HepG2 (cell line): ENCODE measurements at regions of chr7 and their contacts with region 1.

Region 1: GRCh38 chr7:131654668-131655326 is 98.4 kb upstream of the PODXL start:
- DNase-seq: peak; percentile 45
- ATAC-seq: peak; percentile 97
- H3K4me3 ChIP-seq: no peak overlapping the region
- H3K27ac ChIP-seq: no peak overlapping the region
- H3K4me1 ChIP-seq: no peaks in the 10 kb centered on the region
- H3K27me3 ChIP-seq: peaks cover 0 to 6% of the 10 kb centered on the region in 2 experiments; a peak in 2 of 5 replicates
- CTCF ChIP-seq: peak; percentile 95
- EP300 ChIP-seq: no peak
- POLR2A ChIP-seq: no peak
- RAD21 ChIP-seq: peak; percentile 78

Region 2: GRCh38 chr7:131507592-131508331 is 147.0 kb before region 1 on chr7:
- CTCF ChIA-PET with region 1: interaction called, 10 read pairs
- POLR2A ChIA-PET with region 1: no interaction called
- in situ Hi-C with region 1: loop called (anchors 10 kb)
- intact Hi-C with region 1: loop called (anchors 1 kb)
- DNase-seq: peak; percentile 53
- ATAC-seq: peak; percentile 75
- H3K4me3 ChIP-seq: peak overlapping the region in 1 of 3 experiments; percentile 40; a peak in 1 of 6 replicates
- H3K27ac ChIP-seq: no peak overlapping the region
- H3K4me1 ChIP-seq: peaks cover 31% of the 10 kb centered on the region
- H3K27me3 ChIP-seq: no peaks in the 10 kb centered on the region; a peak in 1 of 5 replicates
- CTCF ChIP-seq: peak; percentile 96
- EP300 ChIP-seq: no peak
- POLR2A ChIP-seq: no peak
- RAD21 ChIP-seq: peak; percentile 77

Region 3: GRCh38 chr7:131546583-131547111 is 108.2 kb before region 1 on chr7:
- CTCF ChIA-PET with region 1: interaction called, 3 read pairs
- POLR2A ChIA-PET with region 1: no interaction called
- in situ Hi-C with region 1: loop called (anchors 5 kb)
- intact Hi-C with region 1: loop called (anchors 1 kb)
- DNase-seq: peak; percentile 46
- ATAC-seq: peak; percentile 26
- H3K4me3 ChIP-seq: no peak overlapping the region
- H3K27ac ChIP-seq: no peak overlapping the region
- H3K4me1 ChIP-seq: peaks cover 24% of the 10 kb centered on the region
- H3K27me3 ChIP-seq: peaks cover 0 to 11% of the 10 kb centered on the region in 2 experiments; a peak in 2 of 5 replicates
- CTCF ChIP-seq: peak; percentile 61
- EP300 ChIP-seq: no peak
- POLR2A ChIP-seq: no peak
- RAD21 ChIP-seq: no peak

Region 4: DNA sequence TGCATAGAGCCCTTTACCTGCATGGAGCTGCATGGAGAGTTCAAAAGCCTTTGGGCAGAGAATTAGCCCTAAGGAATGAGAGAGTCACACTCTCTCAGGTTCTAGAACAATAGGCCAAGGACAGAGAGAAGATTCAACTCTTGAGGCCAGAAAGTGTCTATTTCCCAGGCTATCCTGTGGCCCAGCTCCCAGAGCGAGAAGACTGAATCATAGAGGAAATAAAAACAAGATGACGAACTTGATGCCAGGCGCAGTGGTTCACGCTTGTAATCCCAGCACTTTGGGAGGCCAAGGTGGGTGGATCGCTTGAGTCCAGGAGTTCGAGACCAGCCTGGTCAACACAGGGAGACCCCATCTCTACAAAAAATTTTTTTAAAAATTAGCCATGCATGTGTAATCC is 80.1 kb before region 1 on chr7:
- CTCF ChIA-PET with region 1: no interaction called
- POLR2A ChIA-PET with region 1: no interaction called
- in situ Hi-C with region 1: no loop called
- intact Hi-C with region 1: no loop called
- DNase-seq: no peak
- ATAC-seq: no peak
- H3K4me3 ChIP-seq: no peak overlapping the region
- H3K27ac ChIP-seq: no peak overlapping the region
- H3K4me1 ChIP-seq: peaks cover 14% of the 10 kb centered on the region
- H3K27me3 ChIP-seq: no peaks in the 10 kb centered on the region; a peak in 1 of 5 replicates
- CTCF ChIP-seq: no peak
- EP300 ChIP-seq: no peak
- POLR2A ChIP-seq: no peak
- RAD21 ChIP-seq: no peak

Region 5: DNA sequence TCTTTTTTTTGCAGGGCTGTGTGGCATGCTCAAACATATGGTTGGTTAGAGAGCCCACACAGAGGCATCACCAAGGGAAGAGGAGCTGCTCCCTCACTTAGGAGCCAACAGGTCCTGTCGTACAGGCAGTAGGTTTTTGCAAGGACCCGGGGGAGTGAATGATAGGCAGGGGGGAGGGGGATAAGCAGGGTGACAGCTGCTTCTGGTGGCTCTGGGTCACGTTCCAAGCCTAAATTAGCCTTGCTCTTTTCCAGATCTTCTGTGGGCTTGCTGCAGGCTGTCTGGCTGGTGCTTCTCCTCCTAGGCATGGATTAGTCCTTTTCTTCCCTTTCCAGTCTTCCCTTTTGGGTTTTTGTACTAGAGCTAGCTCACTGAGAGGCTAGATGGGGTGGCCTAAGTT is 19.3 kb after region 1 on chr7:
- CTCF ChIA-PET with region 1: no interaction called
- POLR2A ChIA-PET with region 1: no interaction called
- in situ Hi-C with region 1: no loop called
- intact Hi-C with region 1: no loop called
- DNase-seq: no peak
- ATAC-seq: no peak
- H3K4me3 ChIP-seq: no peak overlapping the region
- H3K27ac ChIP-seq: no peak overlapping the region
- H3K4me1 ChIP-seq: no peaks in the 10 kb centered on the region
- H3K27me3 ChIP-seq: peaks cover 0 to 21% of the 10 kb centered on the region in 2 experiments; a peak in 3 of 5 replicates
- CTCF ChIP-seq: no peak
- EP300 ChIP-seq: no peak
- POLR2A ChIP-seq: no peak
- RAD21 ChIP-seq: no peak

Region 6: DNA sequence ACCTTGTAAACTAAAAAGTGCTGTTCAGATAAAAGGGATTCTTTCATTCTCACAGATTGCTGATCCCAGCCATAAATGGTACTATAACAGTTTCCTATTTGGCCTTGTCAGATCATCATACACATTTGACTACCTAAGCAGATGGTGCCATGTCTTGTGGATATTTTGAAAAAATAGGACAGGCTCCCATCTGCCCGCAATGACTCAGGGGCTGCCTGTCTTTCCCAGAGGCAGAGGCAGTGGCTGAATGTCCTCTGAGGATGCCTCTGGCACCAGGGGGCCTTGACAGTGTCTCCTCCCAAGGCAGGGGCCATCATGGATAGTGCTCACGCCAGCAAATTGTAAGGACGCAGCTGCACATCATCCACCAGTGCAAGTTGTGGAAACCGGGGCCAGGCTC is 224.6 kb after region 1 on chr7:
- CTCF ChIA-PET with region 1: no interaction called
- POLR2A ChIA-PET with region 1: no interaction called
- in situ Hi-C with region 1: no loop called
- intact Hi-C with region 1: no loop called
- DNase-seq: no peak
- ATAC-seq: no peak
- H3K4me3 ChIP-seq: no peak overlapping the region
- H3K27ac ChIP-seq: no peak overlapping the region
- H3K4me1 ChIP-seq: no peaks in the 10 kb centered on the region
- H3K27me3 ChIP-seq: no peaks in the 10 kb centered on the region; a peak in 1 of 5 replicates
- CTCF ChIP-seq: no peak
- EP300 ChIP-seq: no peak
- POLR2A ChIP-seq: no peak
- RAD21 ChIP-seq: no peak